ENCODE measurements at regions of chr3 and their contacts with region 1.

Region 1: GRCh38 chr3:112519424-112520001 is 20.2 kb upstream of the BTLA start:
- DNase-seq: peak; percentile 14 to 41 (median 22)
- ATAC-seq: peak; percentile 91
- H3K4me3 ChIP-seq: no peak overlapping the region
- H3K27ac ChIP-seq: no peak overlapping the region
- H3K4me1 ChIP-seq: no peaks in the 10 kb centered on the region
- H3K27me3 ChIP-seq: no peaks in the 10 kb centered on the region
- CTCF ChIP-seq: peak; percentile 45 to 66 (median 47); a peak in 4 of 6 replicates
- EP300 ChIP-seq: no peak
- POLR2A ChIP-seq: no peak
- RAD21 ChIP-seq: peak; percentile 59 to 77

Region 2: GRCh38 chr3:112111785-112112402 is 407.6 kb before region 1 on chr3:
- CTCF ChIA-PET with region 1: interaction called, 7 read pairs
- POLR2A ChIA-PET with region 1: interaction called, 3 read pairs
- in situ Hi-C with region 1: loop called (anchors 25 kb)
- intact Hi-C with region 1: loop called (anchors 5 kb)
- DNase-seq: peak; percentile 47 to 54 (median 50)
- ATAC-seq: peak; percentile 93
- H3K4me3 ChIP-seq: no peak overlapping the region
- H3K27ac ChIP-seq: no peak overlapping the region
- H3K4me1 ChIP-seq: no peaks in the 10 kb centered on the region
- H3K27me3 ChIP-seq: no peaks in the 10 kb centered on the region
- CTCF ChIP-seq: peak; percentile 57 to 72 (median 71)
- EP300 ChIP-seq: no peak
- POLR2A ChIP-seq: no peak
- RAD21 ChIP-seq: peak; percentile 66 to 70

Region 3: GRCh38 chr3:112136959-112137693 is 382.4 kb before region 1 on chr3:
- CTCF ChIA-PET with region 1: interaction called, 5 read pairs
- POLR2A ChIA-PET with region 1: no interaction called
- in situ Hi-C with region 1: no loop called
- intact Hi-C with region 1: loop called (anchors 1 kb)
- DNase-seq: peak in 2 of 4 experiments; percentile 8 to 42
- ATAC-seq: peak; percentile 72
- H3K4me3 ChIP-seq: no peak overlapping the region
- H3K27ac ChIP-seq: no peak overlapping the region
- H3K4me1 ChIP-seq: peaks cover 0 to 7% of the 10 kb centered on the region in 2 experiments; a peak in 1 of 5 replicates
- H3K27me3 ChIP-seq: no peaks in the 10 kb centered on the region
- CTCF ChIP-seq: peak; percentile 34 to 64 (median 51); a peak in 5 of 6 replicates
- EP300 ChIP-seq: no peak
- POLR2A ChIP-seq: no peak
- RAD21 ChIP-seq: peak in 1 of 2 experiments; percentile 63; a peak in 3 of 4 replicates

Region 4: DNA sequence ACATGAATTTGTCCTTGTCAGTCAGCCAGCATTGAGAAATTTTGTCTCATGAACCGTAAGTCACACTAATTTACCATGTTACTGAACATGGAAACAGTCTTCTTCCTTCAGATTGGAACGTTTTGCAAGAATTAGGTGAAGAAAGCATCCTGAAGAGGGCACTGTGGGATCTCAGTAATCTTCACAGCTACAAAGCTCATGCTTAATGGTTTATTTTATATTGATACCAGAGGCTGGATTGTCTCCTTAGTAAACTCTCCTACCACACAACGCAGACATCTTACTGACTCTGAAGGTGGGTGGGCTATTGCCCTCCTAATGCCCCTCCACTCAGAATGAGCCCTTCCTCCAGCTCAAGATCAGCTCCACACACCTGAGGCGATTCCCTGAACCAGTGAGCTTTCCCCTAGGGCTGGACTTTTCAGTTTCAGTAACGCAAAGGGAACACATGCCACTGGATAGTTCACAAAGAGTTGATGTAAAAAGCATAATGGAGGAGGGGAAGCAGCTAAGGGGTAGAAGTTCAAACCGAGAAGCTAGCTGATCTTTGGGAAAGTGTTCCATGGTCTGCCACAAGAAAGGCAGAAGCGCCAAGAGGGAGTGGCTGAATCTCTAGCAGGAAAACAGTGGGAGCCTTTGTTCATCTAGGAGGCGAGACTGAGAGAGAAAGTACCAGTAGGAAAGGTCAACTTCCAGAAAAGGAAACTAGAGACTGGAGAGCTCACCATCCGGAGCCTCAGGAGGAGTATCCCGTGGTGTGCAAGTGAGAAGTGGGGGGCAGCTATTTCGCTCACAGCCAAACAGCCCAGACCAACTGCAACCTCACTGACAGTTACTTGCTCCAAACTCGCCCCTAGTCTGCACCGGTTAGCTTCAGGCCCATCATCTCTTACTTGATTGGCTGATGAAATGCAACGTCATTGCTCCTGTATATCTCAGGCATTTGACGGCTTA is 225.9 kb before region 1 on chr3 and contains the start of gene SLC9C1:
- CTCF ChIA-PET with region 1: interaction called, 6 read pairs
- POLR2A ChIA-PET with region 1: no interaction called
- in situ Hi-C with region 1: no loop called
- intact Hi-C with region 1: loop called (anchors 1 kb)
- DNase-seq: peak; percentile 3 to 37 (median 6)
- ATAC-seq: peak; percentile 77
- H3K4me3 ChIP-seq: no peak within 1 kb of the TSS
- H3K27ac ChIP-seq: no peak within 1 kb of the TSS
- H3K4me1 ChIP-seq: no peaks in the 10 kb centered on the region; a peak in 2 of 5 replicates
- H3K27me3 ChIP-seq: no peaks in the 10 kb centered on the region
- CTCF ChIP-seq: peak in 2 of 3 experiments; percentile 47 to 49; a peak in 4 of 6 replicates
- EP300 ChIP-seq: no peak
- POLR2A ChIP-seq: no peak
- RAD21 ChIP-seq: peak in 1 of 2 experiments; percentile 48; a peak in 2 of 4 replicates
- polyA plus RNA-seq, gene SLC9C1: not detected

Region 5: GRCh38 chr3:112303764-112304325 is 215.7 kb before region 1 on chr3:
- CTCF ChIA-PET with region 1: no interaction called
- POLR2A ChIA-PET with region 1: no interaction called
- in situ Hi-C with region 1: loop called (anchors 25 kb)
- intact Hi-C with region 1: no loop called
- DNase-seq: no peak
- ATAC-seq: no peak
- H3K4me3 ChIP-seq: no peak overlapping the region
- H3K27ac ChIP-seq: no peak overlapping the region
- H3K4me1 ChIP-seq: no peaks in the 10 kb centered on the region
- H3K27me3 ChIP-seq: no peaks in the 10 kb centered on the region
- CTCF ChIP-seq: no peak
- EP300 ChIP-seq: no peak
- POLR2A ChIP-seq: no peak
- RAD21 ChIP-seq: no peak

Region 6: GRCh38 chr3:112327371-112327951 is 192.1 kb before region 1 on chr3:
- CTCF ChIA-PET with region 1: no interaction called
- POLR2A ChIA-PET with region 1: no interaction called
- in situ Hi-C with region 1: loop called (anchors 25 kb)
- intact Hi-C with region 1: loop called (anchors 1 kb)
- DNase-seq: peak in 3 of 4 experiments; percentile 5 to 28 (median 6)
- ATAC-seq: peak; percentile 87
- H3K4me3 ChIP-seq: no peak overlapping the region
- H3K27ac ChIP-seq: no peak overlapping the region
- H3K4me1 ChIP-seq: no peaks in the 10 kb centered on the region
- H3K27me3 ChIP-seq: no peaks in the 10 kb centered on the region
- CTCF ChIP-seq: peak; percentile 34 to 55 (median 42); a peak in 3 of 6 replicates
- EP300 ChIP-seq: no peak
- POLR2A ChIP-seq: no peak
- RAD21 ChIP-seq: peak; percentile 36 to 67; a peak in 3 of 4 replicates

Measured in K562 (cell line).